ENCODE measurements at regions of chr15 and their contacts with region 1.

Region 1: GRCh38 chr15:68053701-68054627 is at the start of gene PIAS1:
- DNase-seq: peak; percentile 93
- H3K4me3 ChIP-seq: peak within 1 kb of the TSS; percentile 86 to 97
- H3K27ac ChIP-seq: peak within 1 kb of the TSS; percentile 91 to 95
- H3K4me1 ChIP-seq: peaks cover 7% of the 10 kb centered on the region
- H3K27me3 ChIP-seq: no peaks in the 10 kb centered on the region
- CTCF ChIP-seq: peak in 1 of 4 experiments; percentile 37
- POLR2A ChIP-seq: peak; percentile 92
- total RNA-seq, gene PIAS1: 40.9 to 58.4 TPM

Region 2: DNA sequence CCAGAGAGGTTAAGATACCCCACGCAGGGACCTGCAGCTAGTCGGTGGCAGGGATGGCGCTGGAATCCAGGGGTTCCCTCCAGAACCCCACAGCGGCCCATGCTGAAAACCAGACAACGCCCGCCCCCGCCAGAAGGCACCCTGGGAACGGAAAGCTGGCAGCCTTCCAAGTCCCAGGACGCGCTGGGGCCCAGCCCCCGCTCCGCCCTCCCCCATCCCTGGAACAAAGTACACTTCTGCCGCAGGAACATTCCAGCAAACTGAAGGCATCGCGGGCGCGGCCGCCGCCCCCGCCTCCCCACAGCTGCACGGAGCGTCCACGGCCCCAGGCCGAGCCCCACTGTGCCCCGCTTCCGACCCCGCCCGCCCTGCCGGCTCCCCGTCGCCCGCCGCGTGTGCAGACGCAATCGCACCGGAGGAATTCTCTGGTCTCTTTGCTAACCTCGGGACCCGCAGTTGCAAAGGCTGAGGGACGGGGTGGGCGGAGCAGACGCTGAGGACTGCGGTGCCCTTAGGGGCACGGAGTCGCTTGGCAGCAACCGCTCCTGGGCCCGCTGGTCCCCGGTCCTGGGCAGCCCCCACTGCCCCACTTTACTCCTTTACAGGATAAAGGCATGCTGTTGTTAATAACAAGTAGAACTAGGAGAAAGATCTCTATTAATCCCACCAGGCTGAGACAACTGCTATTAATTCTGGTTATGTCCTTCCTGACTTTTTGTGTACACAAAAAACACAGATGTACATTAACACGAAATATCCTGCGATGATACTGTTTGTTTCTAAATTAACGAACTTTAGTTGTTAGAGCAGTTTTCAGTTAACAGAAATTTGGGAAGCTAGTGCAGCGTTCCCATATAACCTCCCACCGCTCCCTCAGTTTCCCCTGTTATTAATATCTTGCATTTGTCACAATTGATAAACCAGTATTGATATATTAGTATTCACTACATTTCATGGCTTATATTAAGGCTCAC is 169.2 kb before region 1 on chr15:
- intact Hi-C with region 1: loop called (anchors 10 kb)
- DNase-seq: peak; percentile 67
- H3K4me3 ChIP-seq: peak overlapping the region; percentile 42 to 43
- H3K27ac ChIP-seq: peak overlapping the region; percentile 77 to 86
- H3K4me1 ChIP-seq: peaks cover 3% of the 10 kb centered on the region
- H3K27me3 ChIP-seq: no peaks in the 10 kb centered on the region
- CTCF ChIP-seq: peak in 1 of 4 experiments; percentile 2
- POLR2A ChIP-seq: no peak

Region 3: DNA sequence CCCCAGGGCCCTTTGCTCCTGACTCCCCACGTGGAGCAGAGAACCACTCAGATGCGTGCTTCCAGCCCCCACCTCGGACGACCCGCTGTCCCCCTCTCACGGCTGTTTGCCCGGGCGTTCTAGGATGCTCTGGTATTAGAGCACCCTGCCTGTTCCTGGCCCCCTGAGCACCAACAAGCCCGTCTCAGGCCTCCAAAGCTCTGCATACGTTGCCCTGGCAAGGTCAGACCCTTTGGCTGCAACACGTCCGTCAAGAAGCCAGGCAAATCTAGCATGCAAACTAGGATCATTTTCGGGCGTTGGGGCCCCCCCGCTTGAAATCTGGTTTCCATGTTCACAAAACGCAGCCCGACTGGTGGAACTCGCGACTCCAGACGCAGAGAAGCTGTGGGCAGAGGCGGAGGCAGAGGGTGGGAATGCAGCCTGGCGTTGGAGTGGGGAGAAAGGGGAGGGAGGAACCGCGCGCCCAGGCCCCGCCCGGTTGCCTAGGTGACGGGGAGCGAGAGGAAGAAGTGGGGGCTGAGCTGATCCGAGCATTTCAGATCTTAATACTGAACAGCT is 86.0 kb before region 1 on chr15:
- intact Hi-C with region 1: loop called (anchors 10 kb)
- DNase-seq: peak; percentile 46
- H3K4me3 ChIP-seq: peak overlapping the region; percentile 11 to 26
- H3K27ac ChIP-seq: peak overlapping the region; percentile 14 to 19
- H3K4me1 ChIP-seq: no peaks in the 10 kb centered on the region
- H3K27me3 ChIP-seq: no peaks in the 10 kb centered on the region
- CTCF ChIP-seq: no peak
- POLR2A ChIP-seq: no peak

Region 4: DNA sequence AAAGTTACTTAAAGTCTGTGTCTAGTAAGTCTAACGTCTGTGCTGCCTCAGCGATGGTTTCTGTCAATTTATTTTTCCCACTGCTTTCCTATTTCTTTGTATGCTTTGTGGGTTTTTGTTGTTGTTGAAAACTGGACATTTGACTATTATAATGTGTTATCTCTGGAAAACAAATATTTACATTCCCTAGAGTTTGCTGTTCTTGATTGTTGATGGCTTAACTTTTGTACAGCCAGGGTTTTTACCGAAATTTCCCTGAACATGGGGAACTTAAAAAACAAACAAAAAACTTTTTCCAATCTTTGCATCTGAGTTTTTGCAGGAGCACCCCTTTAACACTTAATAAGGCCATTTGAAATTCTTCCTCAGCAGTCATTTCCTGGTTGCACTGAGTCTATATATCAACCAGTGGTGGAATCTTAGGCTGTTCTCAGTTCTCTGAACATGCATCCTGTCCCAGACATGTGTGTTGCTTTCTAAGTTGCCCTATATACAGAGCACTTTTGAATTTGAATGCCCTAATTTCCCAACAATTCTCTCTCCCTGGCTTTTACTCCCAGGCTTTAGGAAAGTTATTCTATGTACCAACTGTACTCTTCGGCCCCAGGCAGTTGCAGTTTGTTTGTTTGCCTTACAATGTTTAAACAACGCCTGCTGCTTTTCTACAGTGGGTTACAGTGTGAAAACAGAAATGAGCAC is 11.7 kb before region 1 on chr15:
- intact Hi-C with region 1: no loop called
- DNase-seq: no peak
- H3K4me3 ChIP-seq: no peak overlapping the region
- H3K27ac ChIP-seq: peak overlapping the region in 1 of 2 donors; percentile 45
- H3K4me1 ChIP-seq: no peaks in the 10 kb centered on the region
- H3K27me3 ChIP-seq: no peaks in the 10 kb centered on the region
- CTCF ChIP-seq: no peak
- POLR2A ChIP-seq: no peak

Region 5: GRCh38 chr15:68154923-68155559 is 101.1 kb after region 1 on chr15:
- intact Hi-C with region 1: loop called (anchors 10 kb)
- DNase-seq: peak; percentile 35
- H3K4me3 ChIP-seq: no peak overlapping the region
- H3K27ac ChIP-seq: no peak overlapping the region
- H3K4me1 ChIP-seq: no peaks in the 10 kb centered on the region
- H3K27me3 ChIP-seq: no peaks in the 10 kb centered on the region
- CTCF ChIP-seq: peak; percentile 49 to 84 (median 76)
- POLR2A ChIP-seq: no peak